Mammary epithelial cell (primary cell): ENCODE measurements at regions of chrX and their contacts with region 1.

Region 1: DNA sequence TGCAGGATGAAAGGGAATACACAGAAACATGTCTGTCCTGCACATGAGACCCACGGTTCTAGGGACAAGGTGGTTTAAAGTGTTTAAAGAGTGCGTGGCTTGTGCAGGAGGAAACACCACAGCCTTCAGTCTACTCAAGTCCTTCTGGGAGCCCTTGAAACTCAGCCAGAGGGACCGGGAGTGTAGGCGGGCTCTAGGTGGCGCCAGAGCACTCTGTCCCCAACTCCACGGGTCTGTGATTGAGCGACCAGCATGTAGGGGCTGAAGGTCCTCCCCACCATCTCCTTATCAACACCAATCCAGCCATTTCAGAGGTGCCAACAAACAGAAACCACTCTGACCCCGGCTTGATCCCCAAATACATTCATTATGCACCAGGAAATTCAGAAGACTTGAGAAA is 82.0 kb upstream of the CLDN34 start:
- DNase-seq: no peak
- H3K4me3 ChIP-seq: no peak overlapping the region
- H3K27ac ChIP-seq: no peak overlapping the region
- H3K4me1 ChIP-seq: no peaks in the 10 kb centered on the region
- H3K27me3 ChIP-seq: peaks cover 5% of the 10 kb centered on the region
- CTCF ChIP-seq: peak; percentile 44 to 79

Region 2: DNA sequence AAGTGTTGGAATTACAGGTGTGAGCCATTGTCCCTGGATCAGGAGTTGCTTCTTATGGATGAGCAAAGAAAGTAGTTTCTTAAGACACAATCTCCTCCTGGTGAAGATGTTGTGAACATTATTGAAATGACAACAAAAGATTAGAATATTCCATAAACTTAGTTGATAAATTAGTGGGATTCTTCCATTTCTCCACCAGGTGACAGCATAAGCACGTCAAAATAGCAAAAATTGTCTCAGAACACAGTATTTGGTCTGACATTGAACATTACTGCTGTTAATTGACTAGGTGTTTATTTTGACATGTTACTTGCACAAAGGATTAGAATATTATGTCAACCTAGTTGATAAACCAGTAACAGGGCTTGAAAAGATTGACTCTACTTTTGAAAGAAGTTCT is 103.6 kb after region 1 on chrX:
- CTCF ChIA-PET with region 1: no interaction called
- dilution Hi-C with region 1: no loop called
- in situ Hi-C with region 1: no loop called
- intact Hi-C with region 1: loop called (anchors 1 kb)
- DNase-seq: no peak
- H3K4me3 ChIP-seq: no peak overlapping the region
- H3K27ac ChIP-seq: no peak overlapping the region
- H3K4me1 ChIP-seq: no peaks in the 10 kb centered on the region
- H3K27me3 ChIP-seq: no peaks in the 10 kb centered on the region
- CTCF ChIP-seq: peak; percentile 35 to 36

Region 3: DNA sequence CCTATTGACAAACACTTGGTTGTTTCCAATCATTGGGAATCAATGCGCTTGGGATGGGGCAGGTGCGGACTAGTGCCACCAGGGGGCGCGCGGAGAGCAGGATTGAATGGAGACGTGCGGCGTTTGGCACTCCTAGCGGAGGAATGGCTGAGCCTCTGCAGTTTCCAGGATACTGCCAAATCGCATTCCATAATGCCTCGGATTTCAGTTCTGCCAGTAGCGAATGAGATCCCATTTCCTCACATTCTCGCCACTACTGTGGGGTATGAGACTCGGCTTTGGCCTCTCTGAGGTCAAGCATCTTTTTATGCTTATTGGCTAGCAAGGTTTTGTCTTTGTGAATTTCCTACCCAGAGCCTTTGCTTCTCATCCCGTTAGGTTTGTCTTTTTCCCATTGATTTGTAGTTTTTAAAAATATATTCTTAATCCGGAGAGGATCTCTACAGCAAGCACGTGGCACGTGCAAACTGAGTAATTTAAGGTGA is 110.7 kb after region 1 on chrX:
- CTCF ChIA-PET with region 1: no interaction called
- dilution Hi-C with region 1: no loop called
- in situ Hi-C with region 1: no loop called
- intact Hi-C with region 1: loop called (anchors 1 kb)
- DNase-seq: peak; percentile 47
- H3K4me3 ChIP-seq: no peak overlapping the region
- H3K27ac ChIP-seq: no peak overlapping the region
- H3K4me1 ChIP-seq: no peaks in the 10 kb centered on the region
- H3K27me3 ChIP-seq: no peaks in the 10 kb centered on the region
- CTCF ChIP-seq: peak; percentile 78 to 90